Spleen (tissue), 13 donors: ENCODE measurements at regions of chr12 and their contacts with region 1.

Region 1: GRCh38 chr12:42325653-42326474 is at the starts of genes PPHLN1 and ZCRB1:
- DNase-seq: peak; percentile 96
- H3K4me3 ChIP-seq: peak within 1 kb of the TSS; percentile 58 to 91 (median 68)
- H3K27ac ChIP-seq: peak within 1 kb of the TSS; percentile 58 to 89 (median 87)
- H3K4me1 ChIP-seq: peaks cover 29 to 64% (median 55%) of the 10 kb centered on the region in 6 donors
- H3K27me3 ChIP-seq: no peaks in the 10 kb centered on the region
- CTCF ChIP-seq: no peak
- POLR2A ChIP-seq: no peak
- total RNA-seq, gene PPHLN1: 60.0 to 103 (median 75.3) TPM
- total RNA-seq, gene ZCRB1: 27.2 to 43.0 (median 30.6) TPM

Region 2: GRCh38 chr12:42129595-42130204 is 196.2 kb before region 1 on chr12:
- intact Hi-C with region 1: loop called (anchors 2 kb)
- DNase-seq: no peak
- H3K4me3 ChIP-seq: no peak overlapping the region
- H3K27ac ChIP-seq: no peak overlapping the region
- H3K4me1 ChIP-seq: peaks cover 5 to 36% (median 21%) of the 10 kb centered on the region in 6 donors
- H3K27me3 ChIP-seq: no peaks in the 10 kb centered on the region
- CTCF ChIP-seq: peak; percentile 33 to 82 (median 72)
- POLR2A ChIP-seq: no peak